Lower lobe of right lung (tissue), 2 donors: ENCODE measurements at regions of chr10 and their contacts with region 1.

Region 1: DNA sequence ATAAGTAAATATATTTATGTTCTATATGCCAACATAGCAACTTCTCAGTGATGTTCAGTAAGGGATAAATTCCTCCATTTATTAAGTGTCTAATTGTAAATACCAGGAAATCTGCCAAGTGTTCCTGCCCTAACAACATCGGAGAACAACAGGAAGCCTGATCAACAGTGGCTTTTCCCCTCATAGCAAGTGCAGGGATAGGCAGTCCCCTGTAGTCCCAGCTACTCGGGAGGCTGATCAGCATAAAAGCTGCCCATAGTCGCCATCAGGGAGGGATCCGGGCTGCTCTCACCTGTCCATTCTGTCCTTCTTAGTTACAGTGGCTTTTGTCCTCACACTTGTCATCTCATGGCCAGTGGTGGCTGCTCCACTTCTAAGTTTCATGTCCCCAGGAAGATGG is 141.3 kb downstream of the IDE start:
- DNase-seq: no peak
- ATAC-seq: no peak
- H3K4me3 ChIP-seq: no peak overlapping the region
- H3K27ac ChIP-seq: no peak overlapping the region
- H3K4me1 ChIP-seq: no peaks in the 10 kb centered on the region
- H3K27me3 ChIP-seq: no peaks in the 10 kb centered on the region
- CTCF ChIP-seq: no peak

Region 2: GRCh38 chr10:92087750-92088395 is 344.7 kb before region 1 on chr10:
- intact Hi-C with region 1: loop called (anchors 10 kb)
- DNase-seq: peak; percentile 51
- ATAC-seq: peak; percentile 94 to 95
- H3K4me3 ChIP-seq: no peak overlapping the region
- H3K27ac ChIP-seq: no peak overlapping the region
- H3K4me1 ChIP-seq: peaks cover 5% of the 10 kb centered on the region
- H3K27me3 ChIP-seq: no peaks in the 10 kb centered on the region
- CTCF ChIP-seq: peak; percentile 72

Region 3: DNA sequence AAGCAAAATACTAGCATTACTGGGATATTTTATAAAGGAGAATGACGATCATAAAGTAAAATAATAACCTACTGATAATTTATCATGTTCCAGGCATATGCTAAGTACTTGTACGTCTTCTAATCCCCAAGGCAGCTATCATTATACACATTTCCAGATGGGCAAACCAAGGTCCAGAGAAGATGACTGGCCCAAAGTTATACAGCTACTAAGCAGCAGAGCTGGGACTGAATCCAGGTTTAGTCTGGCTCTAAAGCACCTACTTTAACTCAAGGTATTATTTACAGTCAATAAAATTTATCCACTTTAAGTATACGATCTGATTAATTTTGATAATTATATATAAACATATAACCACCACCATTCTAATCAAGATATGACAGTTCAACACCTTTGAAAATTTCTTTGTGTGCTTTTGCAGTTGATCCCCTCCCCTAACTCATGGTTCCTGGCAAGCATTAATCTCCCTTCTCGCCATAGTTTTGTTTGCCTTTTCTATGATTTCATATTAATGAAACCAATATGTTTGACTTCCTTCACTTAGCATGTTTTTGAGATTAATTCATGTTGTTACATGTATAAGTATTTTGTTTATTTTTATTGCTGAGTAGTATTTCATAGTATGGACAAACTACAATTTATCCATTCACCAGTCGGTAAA is 268.4 kb before region 1 on chr10:
- intact Hi-C with region 1: no loop called
- DNase-seq: no peak
- ATAC-seq: no peak
- H3K4me3 ChIP-seq: no peak overlapping the region
- H3K27ac ChIP-seq: no peak overlapping the region
- H3K4me1 ChIP-seq: no peaks in the 10 kb centered on the region
- H3K27me3 ChIP-seq: no peaks in the 10 kb centered on the region
- CTCF ChIP-seq: no peak

Region 4: GRCh38 chr10:92327445-92328433 is 104.9 kb before region 1 on chr10:
- intact Hi-C with region 1: no loop called
- DNase-seq: no peak
- ATAC-seq: no peak
- H3K4me3 ChIP-seq: no peak overlapping the region
- H3K27ac ChIP-seq: no peak overlapping the region
- H3K4me1 ChIP-seq: peaks cover 10% of the 10 kb centered on the region
- H3K27me3 ChIP-seq: no peaks in the 10 kb centered on the region
- CTCF ChIP-seq: no peak